AG04450 (cell line): ENCODE measurements at regions of chr10 and their contacts with region 1.

Region 1: DNA sequence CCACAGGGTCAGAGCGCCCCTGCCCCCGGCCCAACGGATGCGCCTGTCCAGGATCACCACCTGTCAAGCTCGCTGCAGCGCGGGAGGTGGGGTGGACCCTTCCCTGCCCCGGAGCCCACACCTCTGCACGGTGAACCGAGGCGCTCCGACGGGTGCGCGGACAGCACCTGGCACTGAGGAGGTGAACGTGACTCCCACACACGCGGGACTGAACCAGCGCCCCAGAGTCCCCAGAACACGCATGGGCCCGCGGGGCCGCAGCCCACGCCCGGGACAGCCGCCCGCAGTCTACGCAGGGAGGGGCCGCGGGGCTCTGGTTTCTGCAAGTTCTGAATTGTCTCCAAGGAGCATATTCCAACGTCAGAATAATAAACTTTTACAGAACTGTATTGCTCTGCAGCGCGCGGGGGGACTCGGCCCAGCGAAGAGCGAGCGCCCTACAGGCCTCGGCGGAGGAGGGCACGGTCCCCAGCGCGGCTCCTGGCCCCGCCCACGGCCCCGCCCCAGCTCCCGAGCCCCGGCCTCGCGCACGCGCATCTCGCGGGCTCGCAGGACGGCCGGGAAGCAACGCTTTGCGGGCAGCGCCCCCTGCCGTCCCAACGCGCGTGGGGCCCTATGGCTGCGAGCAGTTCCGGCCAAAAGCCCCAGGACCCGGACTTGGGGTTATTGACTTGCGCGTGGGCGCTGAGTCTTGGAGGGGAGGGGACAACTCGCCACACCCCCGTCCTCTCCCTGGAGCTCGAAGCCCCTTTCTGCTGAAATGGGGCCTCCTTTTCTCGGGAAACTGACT is 29.7 kb downstream of the OAT start:
- DNase-seq: peak; percentile 53
- H3K4me3 ChIP-seq: peak overlapping the region; percentile 53
- H3K27ac ChIP-seq: peak overlapping the region; percentile 21
- H3K27me3 ChIP-seq: peaks cover 2% of the 10 kb centered on the region
- CTCF ChIP-seq: peak; percentile 83

Region 2: DNA sequence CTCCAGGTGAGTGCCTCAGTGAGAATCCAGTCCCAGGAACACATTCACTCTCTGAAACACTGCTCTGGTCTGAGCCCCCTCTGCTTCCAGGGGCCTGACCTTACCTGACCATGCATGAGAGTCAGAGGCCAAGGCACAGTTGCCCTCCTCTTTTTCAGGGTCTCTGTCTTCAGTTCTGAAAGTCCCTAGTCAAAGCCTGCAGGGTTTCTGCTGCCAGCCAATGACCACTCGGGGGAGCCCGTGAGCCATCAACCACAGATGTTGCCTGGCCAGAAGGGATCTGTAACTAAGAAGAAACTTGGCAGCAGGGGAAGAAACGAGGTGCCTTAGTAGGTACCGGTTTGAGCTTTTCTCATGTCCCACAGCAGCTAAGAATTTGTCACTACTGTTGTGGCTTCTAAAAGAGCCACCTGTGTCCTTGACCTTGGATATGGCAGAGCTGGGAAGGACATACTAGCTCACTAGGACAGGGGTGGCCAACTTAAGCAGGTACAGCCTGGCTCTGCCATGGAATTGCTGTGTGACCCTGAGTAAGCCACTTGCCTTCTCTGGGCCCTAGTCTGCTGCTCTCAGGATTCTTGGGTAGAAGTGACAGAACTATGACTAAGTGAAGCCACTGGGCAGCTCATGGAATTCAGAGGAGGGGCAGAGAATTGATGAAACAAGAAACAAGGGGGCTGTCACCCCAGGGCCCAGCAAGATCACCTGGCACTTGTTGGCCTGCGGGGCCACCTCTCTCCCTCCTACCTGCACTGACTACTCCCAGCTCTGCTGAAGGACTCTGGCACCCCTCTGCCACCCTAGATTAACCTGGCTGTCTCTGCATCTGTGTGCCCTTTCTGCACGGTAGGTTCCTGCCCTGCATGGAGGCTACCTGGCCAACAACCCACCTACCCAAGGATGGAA is 806.7 kb before region 1 on chr10:
- CTCF ChIA-PET with region 1: interaction called, 11 read pairs
- POLR2A ChIA-PET with region 1: no interaction called
- DNase-seq: no peak
- H3K4me3 ChIP-seq: no peak overlapping the region
- H3K27ac ChIP-seq: no peak overlapping the region
- H3K27me3 ChIP-seq: no peaks in the 10 kb centered on the region
- CTCF ChIP-seq: peak; percentile 82

Region 3: GRCh38 chr10:124106241-124106879 is 282.7 kb before region 1 on chr10:
- CTCF ChIA-PET with region 1: interaction called, 17 read pairs
- POLR2A ChIA-PET with region 1: no interaction called
- DNase-seq: peak; percentile 48
- H3K4me3 ChIP-seq: no peak overlapping the region
- H3K27ac ChIP-seq: no peak overlapping the region
- H3K27me3 ChIP-seq: peaks cover 9% of the 10 kb centered on the region
- CTCF ChIP-seq: no peak

Region 4: GRCh38 chr10:124296121-124296812 is 92.8 kb before region 1 on chr10:
- CTCF ChIA-PET with region 1: interaction called, 11 read pairs
- POLR2A ChIA-PET with region 1: no interaction called
- DNase-seq: no peak
- H3K4me3 ChIP-seq: no peak overlapping the region
- H3K27ac ChIP-seq: no peak overlapping the region
- H3K27me3 ChIP-seq: no peaks in the 10 kb centered on the region
- CTCF ChIP-seq: no peak

Region 5: DNA sequence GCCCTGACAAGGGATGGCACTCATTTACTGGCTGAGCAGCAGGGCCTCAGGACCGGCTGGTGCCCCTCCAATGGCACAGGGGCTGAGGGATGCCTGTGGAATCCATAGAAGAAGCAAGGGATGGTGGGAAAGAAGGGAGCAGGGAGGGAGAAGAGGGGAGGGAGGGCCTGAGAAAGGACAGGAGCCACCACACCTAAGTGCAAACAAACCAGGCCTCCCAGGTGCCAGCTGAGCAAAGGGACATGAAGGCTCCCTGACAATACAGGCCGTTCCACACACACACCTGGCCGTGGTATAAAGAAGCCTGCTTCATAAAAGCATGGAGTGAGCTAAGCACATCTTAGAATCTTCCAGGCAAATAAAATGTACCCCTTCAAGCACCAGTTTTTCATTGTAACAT is 24.4 kb before region 1 on chr10:
- CTCF ChIA-PET with region 1: interaction called, 16 read pairs
- POLR2A ChIA-PET with region 1: no interaction called
- DNase-seq: no peak
- H3K4me3 ChIP-seq: no peak overlapping the region
- H3K27ac ChIP-seq: no peak overlapping the region
- H3K27me3 ChIP-seq: peaks cover 6% of the 10 kb centered on the region
- CTCF ChIP-seq: no peak

Region 6: GRCh38 chr10:124403548-124403947 is 14.5 kb after region 1 on chr10:
- CTCF ChIA-PET with region 1: interaction called, 52 read pairs
- POLR2A ChIA-PET with region 1: no interaction called
- DNase-seq: peak; percentile 45
- H3K4me3 ChIP-seq: no peak overlapping the region
- H3K27ac ChIP-seq: no peak overlapping the region
- H3K27me3 ChIP-seq: no peaks in the 10 kb centered on the region
- CTCF ChIP-seq: peak; percentile 75

Region 7: GRCh38 chr10:124461438-124462347 is 72.7 kb after region 1 on chr10 and contains the start of gene LHPP:
- CTCF ChIA-PET with region 1: no interaction called
- POLR2A ChIA-PET with region 1: no interaction called
- DNase-seq: peak; percentile 3
- H3K4me3 ChIP-seq: peak within 1 kb of the TSS; percentile 83
- H3K27ac ChIP-seq: no peak within 1 kb of the TSS
- H3K27me3 ChIP-seq: peaks cover 11% of the 10 kb centered on the region
- CTCF ChIP-seq: no peak
- polyA plus RNA-seq, gene LHPP: 7.1 and 9.6 TPM in 2 replicates

Region 8: GRCh38 chr10:124477614-124478363 is 88.8 kb after region 1 on chr10:
- CTCF ChIA-PET with region 1: no interaction called
- POLR2A ChIA-PET with region 1: no interaction called
- DNase-seq: no peak
- H3K4me3 ChIP-seq: no peak overlapping the region
- H3K27ac ChIP-seq: no peak overlapping the region
- H3K27me3 ChIP-seq: no peaks in the 10 kb centered on the region
- CTCF ChIP-seq: no peak